ENCODE measurements at regions of chr4 and their contacts with region 1.

Region 1: DNA sequence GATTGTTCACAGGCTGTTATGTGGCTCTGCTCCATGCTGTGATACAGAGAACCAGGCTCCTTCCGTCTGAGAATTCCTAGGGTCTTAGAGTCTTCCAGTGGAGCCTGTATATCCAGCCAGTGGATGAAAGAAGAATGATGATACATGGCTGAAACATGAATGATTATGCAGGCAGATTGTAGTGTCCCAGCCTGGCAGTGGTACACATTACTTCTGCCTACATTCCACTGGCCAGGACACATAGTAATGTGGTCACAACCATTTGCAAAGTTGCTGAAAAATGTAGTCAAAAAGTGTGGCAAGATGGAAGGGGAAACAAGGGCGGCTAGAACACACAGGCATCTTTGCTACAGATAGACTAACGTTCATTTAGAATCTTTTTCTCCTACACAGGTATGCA is 4.5 kb upstream of the GBA3 start:
- DNase-seq: no peak
- ATAC-seq: no peak
- H3K4me3 ChIP-seq: no peak overlapping the region
- H3K27ac ChIP-seq: no peak overlapping the region
- H3K4me1 ChIP-seq: no peaks in the 10 kb centered on the region
- H3K27me3 ChIP-seq: no peaks in the 10 kb centered on the region
- CTCF ChIP-seq: no peak
- POLR2A ChIP-seq: no peak

Region 2: DNA sequence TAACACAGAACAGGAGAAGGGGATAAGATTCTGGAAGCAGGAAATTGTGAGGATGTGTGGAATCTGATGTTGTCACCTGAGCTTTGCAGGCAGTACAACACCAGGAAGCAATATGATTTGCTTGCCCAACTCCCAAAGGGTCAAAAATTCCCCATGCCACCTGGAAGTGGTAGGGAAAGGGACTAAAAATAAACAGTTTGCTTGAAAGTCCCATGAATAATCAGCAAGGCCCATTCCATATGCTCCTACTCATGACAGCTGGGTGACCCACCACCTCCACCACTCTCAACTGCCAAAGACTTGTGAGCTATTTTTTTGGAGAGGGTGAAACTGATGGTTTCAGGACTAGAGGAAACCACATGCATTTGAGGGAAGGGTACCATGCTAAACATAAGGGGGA is 908.1 kb before region 1 on chr4:
- in situ Hi-C with region 1: loop called in 3 of 4 experiments (anchors 10 to 25 kb)
- intact Hi-C with region 1: no loop called
- DNase-seq: no peak
- ATAC-seq: no peak
- H3K4me3 ChIP-seq: no peak overlapping the region
- H3K27ac ChIP-seq: no peak overlapping the region
- H3K4me1 ChIP-seq: no peaks in the 10 kb centered on the region
- H3K27me3 ChIP-seq: no peaks in the 10 kb centered on the region
- CTCF ChIP-seq: no peak
- POLR2A ChIP-seq: no peak

Region 3: GRCh38 chr4:22420291-22420690 is 267.9 kb before region 1 on chr4:
- in situ Hi-C with region 1: no loop called
- intact Hi-C with region 1: no loop called
- DNase-seq: no peak
- ATAC-seq: no peak
- H3K4me3 ChIP-seq: no peak overlapping the region
- H3K27ac ChIP-seq: no peak overlapping the region
- H3K4me1 ChIP-seq: no peaks in the 10 kb centered on the region
- H3K27me3 ChIP-seq: no peaks in the 10 kb centered on the region
- CTCF ChIP-seq: no peak
- POLR2A ChIP-seq: no peak

Measured in gastrocnemius medialis (tissue), 4 donors.